ENCODE measurements at regions of chr5 and their contacts with region 1.

Region 1: GRCh38 chr5:107624233-107624632 is 46.5 kb downstream of the EFNA5 start:
- DNase-seq: no peak
- ATAC-seq: no peak
- H3K4me3 ChIP-seq: no peak overlapping the region
- H3K27ac ChIP-seq: no peak overlapping the region
- H3K4me1 ChIP-seq: 0 out of 2 replicates have a peak, but pooled peaks cover 3% of the 10 kb centered on the region
- H3K27me3 ChIP-seq: no peaks in the 10 kb centered on the region
- CTCF ChIP-seq: no peak
- EP300 ChIP-seq: no peak
- POLR2A ChIP-seq: no peak
- RAD21 ChIP-seq: no peak

Region 2: DNA sequence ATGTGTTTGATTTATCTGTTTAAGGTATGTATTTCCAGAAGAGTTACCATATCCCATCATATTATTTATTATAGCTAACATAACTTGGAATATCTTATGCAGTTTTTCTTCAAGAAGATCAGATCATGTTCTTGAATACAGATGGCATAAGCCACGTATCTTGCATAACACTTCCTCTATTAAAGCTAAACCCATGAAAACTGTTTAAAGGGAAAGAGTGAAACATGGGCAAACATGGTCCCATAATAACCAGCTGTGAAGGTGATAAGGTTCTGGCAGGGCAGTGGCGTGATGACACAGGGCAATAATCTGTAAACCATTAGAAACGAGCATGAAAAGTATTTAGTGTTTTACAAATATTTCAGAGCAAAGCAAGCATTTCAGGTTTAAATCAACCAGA is 12.3 kb after region 1 on chr5:
- CTCF ChIA-PET with region 1: interaction called, 5 read pairs
- POLR2A ChIA-PET with region 1: interaction called, 3 read pairs
- RAD21 ChIA-PET with region 1: no interaction called
- SMC1A ChIA-PET with region 1: interaction called, 10 read pairs
- in situ Hi-C with region 1: no loop called
- intact Hi-C with region 1: no loop called
- DNase-seq: no peak
- ATAC-seq: no peak
- H3K4me3 ChIP-seq: no peak overlapping the region
- H3K27ac ChIP-seq: no peak overlapping the region
- H3K4me1 ChIP-seq: no peaks in the 10 kb centered on the region
- H3K27me3 ChIP-seq: no peaks in the 10 kb centered on the region; a peak in 1 of 4 replicates
- CTCF ChIP-seq: no peak
- EP300 ChIP-seq: no peak
- POLR2A ChIP-seq: no peak
- RAD21 ChIP-seq: no peak

Region 3: DNA sequence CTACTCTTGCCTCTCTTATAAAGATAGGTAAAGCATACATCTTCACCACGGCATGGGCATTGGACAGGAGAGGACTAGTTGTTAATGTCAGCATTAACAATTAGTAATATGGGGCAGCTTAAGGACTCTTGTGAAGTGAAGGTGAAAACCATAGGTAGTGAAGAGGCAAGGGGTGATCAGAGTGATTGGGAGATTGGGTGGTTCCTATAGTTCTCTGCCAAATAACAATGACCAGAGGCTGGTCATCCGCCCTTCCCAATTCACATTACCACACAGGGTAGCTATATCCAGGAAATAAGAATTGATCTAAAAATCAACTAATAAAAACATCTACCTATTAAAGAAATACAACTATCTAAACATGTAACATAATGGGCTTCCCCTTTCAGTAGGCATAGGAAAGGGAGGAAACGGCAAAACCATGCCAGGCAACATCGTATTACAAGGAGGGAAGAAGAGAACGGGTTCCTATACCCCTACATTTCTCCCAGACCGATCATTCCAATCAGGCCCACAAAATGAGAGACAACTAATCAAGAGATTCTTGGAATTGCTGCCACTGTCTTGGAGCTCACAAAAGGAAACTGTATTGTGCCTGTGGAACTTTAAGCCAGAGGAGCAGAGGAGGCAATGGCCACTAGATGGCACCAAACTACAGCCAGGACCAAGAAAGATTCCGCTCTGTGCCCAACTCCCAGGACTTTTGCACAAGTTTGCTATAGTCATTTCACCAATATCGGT is 636.1 kb after region 1 on chr5:
- CTCF ChIA-PET with region 1: no interaction called
- POLR2A ChIA-PET with region 1: no interaction called
- RAD21 ChIA-PET with region 1: no interaction called
- SMC1A ChIA-PET with region 1: no interaction called
- in situ Hi-C with region 1: no loop called
- intact Hi-C with region 1: no loop called
- DNase-seq: peak; percentile 34
- ATAC-seq: peak; percentile 97
- H3K4me3 ChIP-seq: no peak overlapping the region
- H3K27ac ChIP-seq: no peak overlapping the region
- H3K4me1 ChIP-seq: no peaks in the 10 kb centered on the region
- H3K27me3 ChIP-seq: no peaks in the 10 kb centered on the region
- CTCF ChIP-seq: peak; percentile 91 to 94 (median 93)
- EP300 ChIP-seq: no peak
- POLR2A ChIP-seq: no peak
- RAD21 ChIP-seq: peak; percentile 89

Measured in GM12878 (cell line).